Heart left ventricle (tissue), 16 donors: ENCODE measurements at regions of chr3 and their contacts with region 1.

Region 1: GRCh38 chr3:100400780-100401673 is at the starts of genes LNP1 and TOMM70:
- DNase-seq: peak; percentile 97 to 98 (median 98)
- ATAC-seq: peak; percentile 97 to 98 (median 98)
- H3K4me3 ChIP-seq: peak within 1 kb of the TSS; percentile 56 to 98 (median 88)
- H3K27ac ChIP-seq: peak within 1 kb of the TSS; percentile 80 to 97 (median 94)
- H3K4me1 ChIP-seq: peaks cover 0 to 64% (median 31%) of the 10 kb centered on the region in 12 donors
- H3K27me3 ChIP-seq: no peaks in the 10 kb centered on the region
- CTCF ChIP-seq: no peak
- POLR2A ChIP-seq: peak in 1 of 2 donors; percentile 71
- total RNA-seq, gene LNP1: 2.5 to 5.9 (median 3.7) TPM
- total RNA-seq, gene TOMM70: 39.1 to 67.0 (median 57.2) TPM

Region 2: DNA sequence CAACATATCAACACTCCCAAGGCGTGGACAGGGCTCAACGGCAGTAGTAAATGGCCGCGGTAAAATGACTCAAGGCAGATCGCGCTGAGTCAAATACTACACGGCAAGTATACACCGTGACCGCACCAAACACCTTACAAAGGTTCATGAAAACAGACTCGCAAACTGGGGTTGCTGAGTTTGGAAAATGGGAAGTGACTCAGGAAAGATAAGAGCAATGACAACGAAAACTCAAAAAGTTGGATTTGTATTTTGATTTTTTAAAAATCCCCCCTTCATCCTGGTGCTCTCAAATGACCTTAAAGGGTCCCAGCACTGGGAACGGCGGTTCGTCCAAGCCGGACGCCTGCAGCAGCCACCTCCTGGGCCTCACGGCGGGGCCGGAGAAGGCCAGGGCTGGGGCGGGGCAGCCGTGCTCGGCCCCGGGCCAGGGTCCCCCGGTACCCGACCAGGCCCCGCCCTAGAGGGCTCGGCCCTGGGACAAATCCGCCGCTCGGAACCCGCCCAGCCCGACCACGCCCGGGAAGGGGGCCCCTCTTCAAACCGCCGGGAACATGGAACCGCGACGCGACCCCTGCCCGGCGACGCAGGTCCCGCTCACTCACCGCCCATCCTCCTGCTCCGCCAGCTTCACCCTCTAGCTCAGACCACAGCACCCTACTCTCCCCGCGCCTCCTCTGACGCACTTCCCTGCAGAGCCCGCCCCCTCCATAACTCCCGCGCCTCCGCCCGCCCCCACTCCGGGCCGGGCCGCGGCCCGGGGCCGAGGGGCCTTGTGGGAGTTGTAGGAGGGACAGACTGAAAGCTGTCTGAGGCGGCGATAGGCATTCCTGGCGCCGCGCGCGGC is 1878.6 kb before region 1 on chr3 and contains the start of gene CLDND1:
- intact Hi-C with region 1: loop called in 1 of 10 experiments (anchors 10 kb)
- DNase-seq: peak; percentile 98 to 99 (median 98)
- ATAC-seq: peak; percentile 99 to 100 (median 100)
- H3K4me3 ChIP-seq: peak within 1 kb of the TSS; percentile 60 to 94 (median 74)
- H3K27ac ChIP-seq: peak within 1 kb of the TSS; percentile 92 to 98 (median 95)
- H3K4me1 ChIP-seq: peaks cover 0 to 30% (median 20%) of the 10 kb centered on the region in 12 donors
- H3K27me3 ChIP-seq: no peaks in the 10 kb centered on the region
- CTCF ChIP-seq: no peak
- POLR2A ChIP-seq: peak in 1 of 2 donors; percentile 91
- total RNA-seq, gene CLDND1: 64.2 to 155 (median 77.0) TPM

Region 3: DNA sequence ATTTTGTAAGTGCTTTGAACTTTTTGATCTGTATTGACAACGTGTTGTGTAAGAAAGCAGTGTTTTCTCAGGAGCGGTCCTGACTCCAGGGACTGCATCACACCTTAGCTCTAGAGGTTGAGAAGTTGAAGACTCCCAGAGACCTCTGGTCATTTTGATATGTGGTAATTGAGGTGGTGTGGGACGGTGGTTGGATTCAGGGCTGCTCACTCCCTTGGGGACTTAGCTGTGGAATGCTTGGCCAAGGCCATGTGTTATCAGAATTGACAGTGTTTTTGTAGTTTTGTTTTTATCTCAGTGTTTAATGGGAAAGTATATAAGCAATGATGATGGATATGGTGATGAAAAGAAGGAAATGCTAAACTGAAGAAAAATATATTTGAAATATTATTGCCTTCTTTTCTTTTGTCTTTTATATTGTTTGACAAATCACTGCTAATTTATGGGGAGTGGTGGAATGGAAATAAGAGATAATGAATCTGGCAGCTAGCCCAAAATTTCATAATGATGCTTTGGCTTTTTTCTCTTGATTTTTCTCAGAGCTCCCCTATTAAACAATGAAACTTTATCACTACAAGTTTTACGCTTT is 567.3 kb before region 1 on chr3:
- intact Hi-C with region 1: loop called in 1 of 10 experiments (anchors 10 kb)
- DNase-seq: no peak
- ATAC-seq: peak in 1 of 4 donors; percentile 18
- H3K4me3 ChIP-seq: no peak overlapping the region
- H3K27ac ChIP-seq: peak overlapping the region in 5 of 12 donors; percentile 5 to 37 (median 26)
- H3K4me1 ChIP-seq: peaks cover 0 to 42% (median 15%) of the 10 kb centered on the region in 12 donors
- H3K27me3 ChIP-seq: no peaks in the 10 kb centered on the region
- CTCF ChIP-seq: no peak
- POLR2A ChIP-seq: no peak

Region 4: GRCh38 chr3:100334488-100335351 is 66.3 kb before region 1 on chr3 and contains the start of gene NIT2:
- intact Hi-C with region 1: loop called in 2 of 10 experiments (anchors 5 to 10 kb)
- DNase-seq: peak; percentile 87 to 93 (median 92)
- ATAC-seq: peak; percentile 80 to 98 (median 98)
- H3K4me3 ChIP-seq: peak within 1 kb of the TSS; percentile 57 to 80 (median 68)
- H3K27ac ChIP-seq: peak within 1 kb of the TSS; percentile 35 to 86 (median 82)
- H3K4me1 ChIP-seq: peaks cover 0 to 20% (median 8%) of the 10 kb centered on the region in 12 donors
- H3K27me3 ChIP-seq: no peaks in the 10 kb centered on the region
- CTCF ChIP-seq: peak in 1 of 12 donors; percentile 16
- POLR2A ChIP-seq: peak in 1 of 2 donors; percentile 72
- total RNA-seq, gene NIT2: 11.6 to 50.9 (median 43.9) TPM

Region 5: GRCh38 chr3:100492059-100493006 is 91.3 kb after region 1 on chr3 and contains the start of gene TMEM45A:
- intact Hi-C with region 1: loop called in 2 of 10 experiments (anchors 5 kb)
- DNase-seq: peak; percentile 94 to 98 (median 95)
- ATAC-seq: peak; percentile 100
- H3K4me3 ChIP-seq: peak within 1 kb of the TSS; percentile 27 to 70 (median 61)
- H3K27ac ChIP-seq: peak within 1 kb of the TSS in 11 of 12 donors; percentile 16 to 81 (median 64)
- H3K4me1 ChIP-seq: peaks cover 0 to 16% (median 0%) of the 10 kb centered on the region in 12 donors
- H3K27me3 ChIP-seq: no peaks in the 10 kb centered on the region
- CTCF ChIP-seq: no peak
- POLR2A ChIP-seq: peak in 1 of 2 donors; percentile 73
- total RNA-seq, gene TMEM45A: 1.8 to 6.6 (median 3.1) TPM

Region 6: DNA sequence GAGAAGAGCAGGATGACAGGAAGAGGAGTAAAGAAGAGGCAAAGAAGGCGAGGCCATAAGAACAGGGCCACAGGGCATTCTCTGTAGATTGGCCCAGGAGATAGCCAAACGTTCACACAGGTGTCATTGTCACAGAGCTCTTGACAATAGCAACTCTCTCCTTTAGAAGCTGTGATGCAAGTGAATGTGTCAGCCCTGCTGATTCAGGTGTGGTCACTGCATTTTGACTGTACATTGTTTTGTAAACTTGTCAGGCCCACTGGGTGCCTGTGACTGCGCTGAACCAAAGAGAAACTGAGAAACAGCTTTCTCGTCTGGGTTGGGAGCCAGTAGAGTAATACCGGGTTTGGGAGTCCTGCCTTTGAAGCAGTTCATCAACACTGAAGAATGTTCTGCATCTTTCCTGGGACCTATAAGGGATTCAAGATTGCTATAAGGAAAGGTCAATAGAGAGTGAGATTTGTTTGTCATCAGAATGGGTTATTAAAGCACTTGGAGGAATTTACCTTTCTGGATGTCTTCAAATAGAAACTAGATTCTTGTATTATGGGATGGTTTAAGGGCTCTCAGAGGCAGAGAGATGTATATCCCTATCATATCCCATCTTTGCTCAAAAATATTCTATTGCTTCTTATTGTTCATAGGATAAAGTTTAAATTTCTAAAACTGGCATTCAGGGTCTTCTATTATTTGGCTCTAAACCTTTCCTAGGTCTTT is 136.8 kb after region 1 on chr3:
- intact Hi-C with region 1: no loop called
- DNase-seq: no peak
- ATAC-seq: no peak
- H3K4me3 ChIP-seq: no peak overlapping the region
- H3K27ac ChIP-seq: no peak overlapping the region
- H3K4me1 ChIP-seq: no peaks in the 10 kb centered on the region
- H3K27me3 ChIP-seq: no peaks in the 10 kb centered on the region
- CTCF ChIP-seq: no peak
- POLR2A ChIP-seq: no peak

Region 7: GRCh38 chr3:100708967-100709841 is 308.2 kb after region 1 on chr3 and contains the start of gene TFG:
- intact Hi-C with region 1: loop called in 1 of 10 experiments (anchors 10 kb)
- DNase-seq: peak; percentile 97 to 99 (median 98)
- ATAC-seq: peak; percentile 97 to 99 (median 98)
- H3K4me3 ChIP-seq: peak within 1 kb of the TSS; percentile 73 to 97 (median 83)
- H3K27ac ChIP-seq: peak within 1 kb of the TSS; percentile 91 to 99 (median 94)
- H3K4me1 ChIP-seq: peaks cover 0 to 41% (median 31%) of the 10 kb centered on the region in 12 donors
- H3K27me3 ChIP-seq: peaks cover 0 to 13% (median 0%) of the 10 kb centered on the region in 9 donors
- CTCF ChIP-seq: no peak
- POLR2A ChIP-seq: peak in 1 of 2 donors; percentile 73
- total RNA-seq, gene TFG: 68.2 to 103 (median 90.5) TPM